ENCODE measurements at regions of chr12 and their contacts with region 1.

Region 1: GRCh38 chr12:57069523-57069922 is 9.1 kb downstream of the NEMP1 start:
- DNase-seq: peak; percentile 39 to 66
- ATAC-seq: peak; percentile 87 to 98
- H3K4me3 ChIP-seq: no peak overlapping the region
- H3K27ac ChIP-seq: peak overlapping the region; percentile 27 to 62 (median 42)
- H3K4me1 ChIP-seq: peaks cover 0 to 3% of the 10 kb centered on the region in 2 donors
- H3K27me3 ChIP-seq: no peaks in the 10 kb centered on the region
- CTCF ChIP-seq: peak; percentile 75 to 83 (median 81)
- POLR2A ChIP-seq: no peak

Region 2: GRCh38 chr12:57111031-57111734 is 41.7 kb after region 1 on chr12 and contains the start of gene STAT6:
- in situ Hi-C with region 1: loop called (anchors 5 to 10 kb)
- intact Hi-C with region 1: loop called (anchors 1 kb)
- DNase-seq: peak in 1 of 2 donors; percentile 73
- ATAC-seq: peak; percentile 55 to 60
- H3K4me3 ChIP-seq: peak within 1 kb of the TSS; percentile 58 to 68 (median 64)
- H3K27ac ChIP-seq: peak within 1 kb of the TSS; percentile 87 to 94 (median 93)
- H3K4me1 ChIP-seq: peaks cover 9 to 15% of the 10 kb centered on the region in 2 donors
- H3K27me3 ChIP-seq: no peaks in the 10 kb centered on the region
- CTCF ChIP-seq: no peak
- POLR2A ChIP-seq: peak; percentile 39 to 57
- total RNA-seq, gene STAT6: 12.5 to 17.4 (median 14.4) TPM

Region 3: DNA sequence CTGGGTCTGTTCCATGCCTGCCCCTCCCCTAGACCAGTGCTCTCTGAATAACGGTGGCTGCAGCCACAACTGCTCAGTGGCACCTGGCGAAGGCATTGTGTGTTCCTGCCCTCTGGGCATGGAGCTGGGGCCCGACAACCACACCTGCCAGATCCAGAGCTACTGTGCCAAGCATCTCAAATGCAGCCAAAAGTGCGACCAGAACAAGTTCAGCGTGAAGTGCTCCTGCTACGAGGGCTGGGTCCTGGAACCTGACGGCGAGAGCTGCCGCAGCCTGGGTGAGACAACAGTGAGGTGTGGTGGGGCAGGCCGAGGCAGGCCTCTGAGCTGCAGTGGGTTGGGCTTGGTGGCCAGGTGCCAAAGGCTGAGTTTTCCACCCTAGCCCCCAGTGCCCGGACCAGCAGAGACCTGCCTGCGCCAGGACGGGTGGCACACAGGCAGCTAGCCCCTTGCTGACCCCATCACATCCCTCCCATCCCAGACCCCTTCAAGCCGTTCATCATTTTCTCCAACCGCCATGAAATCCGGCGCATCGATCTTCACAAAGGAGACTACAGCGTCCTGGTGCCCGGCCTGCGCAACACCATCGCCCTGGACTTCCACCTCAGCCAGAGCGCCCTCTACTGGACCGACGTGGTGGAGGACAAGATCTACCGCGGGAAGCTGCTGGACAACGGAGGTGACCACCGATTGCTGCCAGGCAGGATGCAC is 106.1 kb after region 1 on chr12:
- in situ Hi-C with region 1: loop called in 2 of 4 experiments (anchors 10 kb)
- intact Hi-C with region 1: no loop called
- DNase-seq: peak; percentile 60 to 72
- ATAC-seq: peak; percentile 41 to 68
- H3K4me3 ChIP-seq: no peak overlapping the region
- H3K27ac ChIP-seq: no peak overlapping the region
- H3K4me1 ChIP-seq: no peaks in the 10 kb centered on the region
- H3K27me3 ChIP-seq: no peaks in the 10 kb centered on the region
- CTCF ChIP-seq: peak; percentile 34 to 74 (median 64)
- POLR2A ChIP-seq: no peak

Region 4: GRCh38 chr12:57182921-57183790 is 113.6 kb after region 1 on chr12:
- in situ Hi-C with region 1: loop called in 2 of 4 experiments (anchors 10 kb)
- intact Hi-C with region 1: loop called (anchors 2 kb)
- DNase-seq: peak; percentile 35 to 62
- ATAC-seq: peak; percentile 77 to 93
- H3K4me3 ChIP-seq: no peak overlapping the region
- H3K27ac ChIP-seq: no peak overlapping the region
- H3K4me1 ChIP-seq: no peaks in the 10 kb centered on the region
- H3K27me3 ChIP-seq: no peaks in the 10 kb centered on the region
- CTCF ChIP-seq: peak; percentile 86 to 91 (median 89)
- POLR2A ChIP-seq: no peak

Region 5: GRCh38 chr12:58321414-58321813 is 1251.9 kb after region 1 on chr12:
- in situ Hi-C with region 1: no loop called
- intact Hi-C with region 1: no loop called
- DNase-seq: no peak
- ATAC-seq: no peak
- H3K4me3 ChIP-seq: no peak overlapping the region
- H3K27ac ChIP-seq: no peak overlapping the region
- H3K4me1 ChIP-seq: no peaks in the 10 kb centered on the region
- H3K27me3 ChIP-seq: no peaks in the 10 kb centered on the region
- CTCF ChIP-seq: no peak
- POLR2A ChIP-seq: no peak

Measured in gastrocnemius medialis (tissue), 4 donors.